ENCODE measurements at regions of chr16 and their contacts with region 1.

Region 1: DNA sequence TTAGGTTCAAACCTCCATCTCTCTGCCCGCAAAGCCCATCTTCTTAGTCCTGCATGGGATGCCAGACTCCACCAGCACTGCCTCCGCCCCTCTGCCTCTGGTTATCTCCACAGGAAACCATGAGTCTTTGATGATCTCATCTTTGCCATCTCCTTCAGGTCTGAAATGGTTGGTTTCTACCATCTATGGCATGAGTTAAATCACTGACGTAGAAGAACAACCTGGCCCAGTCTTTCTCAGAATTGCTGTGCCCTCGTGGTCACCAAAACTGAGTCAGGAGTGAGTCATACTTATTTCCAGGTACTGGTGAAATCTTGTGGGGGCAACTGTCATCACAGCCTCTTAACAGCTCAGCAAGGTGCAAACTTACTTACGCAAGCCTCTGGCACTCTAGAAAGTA is 468.7 kb upstream of the C16orf82 start:
- DNase-seq: peak; percentile 94
- H3K4me3 Mint-ChIP-seq: peak overlapping the region; percentile 66
- H3K27ac Mint-ChIP-seq: peak overlapping the region; percentile 96
- H3K4me1 Mint-ChIP-seq: peaks cover 67% of the 10 kb centered on the region
- H3K27me3 Mint-ChIP-seq: no peaks in the 10 kb centered on the region

Region 2: GRCh38 chr16:26567356-26567755 is 30.7 kb before region 1 on chr16:
- intact Hi-C with region 1: no loop called
- DNase-seq: no peak
- H3K4me3 Mint-ChIP-seq: no peak overlapping the region
- H3K27ac Mint-ChIP-seq: no peak overlapping the region
- H3K4me1 Mint-ChIP-seq: peaks cover 9% of the 10 kb centered on the region
- H3K27me3 Mint-ChIP-seq: peaks cover 31% of the 10 kb centered on the region

Region 3: DNA sequence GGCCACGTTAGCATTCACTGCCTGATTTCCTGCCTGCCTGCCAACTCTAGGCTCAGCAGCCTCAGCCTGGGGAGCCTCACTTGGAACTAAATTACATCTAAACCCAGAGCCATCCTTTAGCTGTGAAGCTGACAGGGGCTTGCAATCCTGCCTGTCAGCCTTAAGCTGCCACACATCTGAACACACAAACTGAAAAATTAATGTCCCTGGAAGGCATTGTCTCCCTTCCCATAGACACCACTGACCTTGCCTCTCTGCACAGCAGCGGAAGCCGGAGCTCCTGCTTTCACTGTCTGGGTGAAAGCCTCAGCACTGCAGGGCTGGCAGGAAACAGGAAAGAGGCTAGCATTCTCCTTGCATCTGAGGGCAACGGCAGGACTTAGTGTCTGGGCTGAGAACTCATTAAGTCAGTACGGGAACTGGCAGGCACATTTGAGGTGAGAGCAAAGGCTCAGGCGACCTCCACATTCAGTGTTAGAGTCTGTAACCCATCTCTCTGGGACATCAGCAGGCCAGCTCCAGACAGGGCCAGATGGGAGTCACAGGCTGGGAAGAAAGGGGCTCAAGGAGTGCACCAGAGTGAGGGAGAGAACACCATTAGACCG is 16.3 kb after region 1 on chr16:
- intact Hi-C with region 1: loop called (anchors 2 kb)
- DNase-seq: peak; percentile 82
- H3K4me3 Mint-ChIP-seq: peak overlapping the region; percentile 83
- H3K27ac Mint-ChIP-seq: peak overlapping the region; percentile 92
- H3K4me1 Mint-ChIP-seq: peaks cover 41% of the 10 kb centered on the region
- H3K27me3 Mint-ChIP-seq: peaks cover 5% of the 10 kb centered on the region

Region 4: DNA sequence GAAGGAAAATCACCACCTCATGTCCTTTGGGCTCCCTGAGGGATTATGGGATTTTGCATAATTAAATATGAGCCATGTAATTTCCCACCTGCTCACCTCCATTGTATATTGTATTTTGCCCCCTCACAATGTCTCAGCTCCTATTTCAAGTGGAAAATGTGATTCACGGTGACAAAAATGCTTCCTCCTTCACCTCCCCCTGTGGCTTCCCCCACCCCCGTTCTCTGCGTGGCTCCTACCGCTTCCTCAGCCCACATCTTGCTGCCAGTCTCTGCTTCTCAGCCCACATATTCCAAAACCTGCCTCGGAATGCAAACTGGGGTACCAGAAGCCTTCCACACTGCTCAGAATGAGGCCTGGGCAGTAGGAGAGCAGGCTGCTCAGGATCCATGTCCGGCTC is 74.1 kb after region 1 on chr16:
- intact Hi-C with region 1: loop called (anchors 1 kb)
- DNase-seq: peak; percentile 59
- H3K4me3 Mint-ChIP-seq: peak overlapping the region; percentile 48
- H3K27ac Mint-ChIP-seq: peak overlapping the region; percentile 92
- H3K4me1 Mint-ChIP-seq: peaks cover 33% of the 10 kb centered on the region
- H3K27me3 Mint-ChIP-seq: peaks cover 2% of the 10 kb centered on the region

Region 5: GRCh38 chr16:27179500-27180072 is 581.5 kb after region 1 on chr16:
- intact Hi-C with region 1: loop called (anchors 10 kb)
- DNase-seq: peak; percentile 96
- H3K4me3 Mint-ChIP-seq: peak overlapping the region; percentile 3
- H3K27ac Mint-ChIP-seq: peak overlapping the region; percentile 73
- H3K4me1 Mint-ChIP-seq: peaks cover 38% of the 10 kb centered on the region
- H3K27me3 Mint-ChIP-seq: peaks cover 3% of the 10 kb centered on the region